Activated B cell treated with CpG ODN at 0.5 μM for 24 hours (primary cell): ENCODE measurements at regions of chr6 and their contacts with region 1.

Region 1: GRCh38 chr6:26223650-26224546 is 136.7 kb downstream of the HFE start:
- DNase-seq: no peak
- ATAC-seq: peak; percentile 87
- H3K4me3 Mint-ChIP-seq: no peak overlapping the region
- H3K27ac Mint-ChIP-seq: no peak overlapping the region
- H3K4me1 Mint-ChIP-seq: peaks cover 4% of the 10 kb centered on the region
- H3K27me3 Mint-ChIP-seq: no peaks in the 10 kb centered on the region
- CTCF ChIP-seq: no peak

Region 2: DNA sequence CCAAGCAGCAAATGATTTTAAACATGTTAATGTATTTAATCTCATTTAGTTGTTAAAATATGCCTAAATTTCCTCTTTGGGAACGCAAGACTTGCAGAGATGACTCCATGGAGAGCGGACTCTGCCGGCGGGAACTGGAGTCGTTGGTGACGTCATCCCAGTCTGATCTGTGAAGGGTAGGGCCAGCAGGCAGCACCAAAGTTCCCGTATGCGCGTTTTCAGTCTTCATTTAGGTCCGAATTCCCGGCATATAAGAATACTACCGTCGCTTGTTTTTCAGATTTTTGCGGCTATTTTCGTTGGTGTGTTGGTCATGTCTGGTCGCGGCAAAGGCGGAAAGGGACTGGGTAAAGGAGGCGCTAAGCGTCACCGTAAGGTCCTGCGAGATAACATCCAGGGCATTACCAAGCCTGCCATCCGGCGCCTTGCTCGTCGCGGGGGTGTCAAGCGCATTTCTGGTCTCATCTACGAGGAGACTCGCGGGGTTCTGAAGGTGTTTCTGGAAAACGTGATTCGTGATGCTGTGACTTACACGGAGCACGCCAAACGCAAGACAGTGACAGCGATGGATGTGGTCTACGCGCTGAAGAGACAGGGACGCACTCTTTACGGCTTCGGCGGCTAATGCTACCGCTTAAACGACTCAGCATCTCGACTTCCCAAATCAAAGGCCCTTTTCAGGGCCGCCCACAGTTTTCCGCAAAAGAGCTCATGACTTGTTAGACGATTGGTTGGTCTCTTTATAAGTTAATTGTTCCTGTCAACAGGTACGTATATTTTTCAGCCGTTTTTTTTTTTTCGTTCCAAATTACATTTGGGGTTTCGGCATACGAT is 19.3 kb before region 1 on chr6:
- CTCF ChIA-PET with region 1: no interaction called
- POLR2A ChIA-PET with region 1: interaction called, 63 read pairs
- intact Hi-C with region 1: no loop called
- DNase-seq: peak; percentile 70
- ATAC-seq: peak; percentile 59
- H3K4me3 Mint-ChIP-seq: no peak overlapping the region
- H3K27ac Mint-ChIP-seq: no peak overlapping the region
- H3K4me1 Mint-ChIP-seq: peaks cover 30% of the 10 kb centered on the region
- H3K27me3 Mint-ChIP-seq: peaks cover 2% of the 10 kb centered on the region
- CTCF ChIP-seq: no peak

Region 3: GRCh38 chr6:27224729-27225128 is 1000.8 kb after region 1 on chr6:
- CTCF ChIA-PET with region 1: no interaction called
- POLR2A ChIA-PET with region 1: no interaction called
- intact Hi-C with region 1: no loop called
- DNase-seq: no peak
- ATAC-seq: no peak
- H3K4me3 Mint-ChIP-seq: no peak overlapping the region
- H3K27ac Mint-ChIP-seq: no peak overlapping the region
- H3K4me1 Mint-ChIP-seq: no peaks in the 10 kb centered on the region
- H3K27me3 Mint-ChIP-seq: peaks cover 55% of the 10 kb centered on the region
- CTCF ChIP-seq: no peak